Esophagus squamous epithelium (tissue), 5 donors: ENCODE measurements at regions of chr13 and their contacts with region 1.

Region 1: DNA sequence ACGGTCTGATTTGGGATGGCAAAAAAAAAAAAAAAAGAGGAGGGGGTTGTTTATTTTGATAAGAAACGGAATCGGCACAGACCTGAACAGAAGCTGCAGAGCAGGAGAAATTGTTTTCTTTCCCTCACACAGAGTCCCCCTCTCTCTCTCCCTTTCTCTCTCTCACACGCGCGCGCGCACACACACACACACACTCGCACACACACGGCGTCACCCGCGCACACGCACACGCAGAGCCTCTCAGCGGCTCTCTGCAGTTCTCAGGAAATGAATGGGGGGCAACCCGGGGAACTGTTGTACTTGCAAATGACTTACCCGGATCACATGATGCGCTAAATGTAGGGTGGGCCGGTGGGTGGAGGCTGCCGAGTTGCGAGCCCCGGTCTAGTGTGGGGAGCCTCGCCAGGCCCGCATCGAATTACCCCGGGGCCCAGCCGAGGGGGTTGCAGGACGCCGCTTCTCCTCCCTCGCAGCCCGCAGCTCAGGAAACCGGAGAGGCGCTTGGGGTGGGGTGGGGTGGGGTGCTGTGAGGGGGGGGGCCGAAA is 475 bp downstream of the KLF12 start:
- DNase-seq: peak; percentile 78
- H3K4me3 ChIP-seq: peak overlapping the region; percentile 65 to 90 (median 76)
- H3K27ac ChIP-seq: peak overlapping the region; percentile 73 to 95 (median 90)
- H3K4me1 ChIP-seq: peaks cover 0 to 72% (median 9%) of the 10 kb centered on the region in 3 donors
- H3K27me3 ChIP-seq: peaks cover 0 to 13% (median 0%) of the 10 kb centered on the region in 4 donors
- CTCF ChIP-seq: no peak
- POLR2A ChIP-seq: peak in 2 of 4 donors; percentile 42 to 77

Region 2: GRCh38 chr13:73835138-73835721 is 298.5 kb before region 1 on chr13:
- intact Hi-C with region 1: loop called (anchors 10 kb)
- DNase-seq: no peak
- H3K4me3 ChIP-seq: no peak overlapping the region
- H3K27ac ChIP-seq: no peak overlapping the region
- H3K4me1 ChIP-seq: no peaks in the 10 kb centered on the region
- H3K27me3 ChIP-seq: no peaks in the 10 kb centered on the region
- CTCF ChIP-seq: peak; percentile 52 to 69 (median 65)
- POLR2A ChIP-seq: no peak